Left cardiac atrium (tissue), 4 donors: ENCODE measurements at regions of chr10 and their contacts with region 1.

Region 1: GRCh38 chr10:51001587-51001986 is 72.7 kb upstream of the PRKG1 start:
- DNase-seq: no peak
- ATAC-seq: peak; percentile 50 to 60

Region 2: DNA sequence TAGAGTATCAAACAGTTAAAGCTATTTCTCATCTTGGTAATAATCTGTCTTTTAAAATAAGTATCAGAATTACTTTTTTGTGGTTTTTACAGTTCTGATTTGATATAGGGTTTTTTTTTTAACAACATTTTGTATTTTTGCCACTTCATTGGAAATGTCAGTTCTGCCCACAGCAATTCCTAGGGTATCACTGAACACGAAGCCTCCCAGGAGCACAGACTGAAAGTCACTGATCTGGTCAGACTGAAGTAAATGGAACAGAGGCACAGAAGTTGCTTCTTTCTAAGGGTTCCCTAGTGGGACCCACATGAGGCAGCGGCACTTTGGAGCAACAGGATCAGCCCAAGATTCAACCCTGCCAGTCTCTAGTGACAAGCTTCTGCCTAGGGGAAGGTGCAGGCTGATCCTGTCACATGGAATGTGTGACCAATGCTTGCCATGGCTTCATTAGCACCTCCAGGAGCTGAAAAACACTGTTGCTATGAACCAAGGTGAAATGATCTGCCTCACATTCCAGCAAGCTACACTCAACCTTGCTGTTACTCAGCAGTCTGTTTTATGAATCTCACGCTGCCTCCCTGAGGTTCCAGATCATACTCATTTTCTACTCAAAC is 971.3 kb after region 1 on chr10:
- intact Hi-C with region 1: loop called in 1 of 2 experiments (anchors 10 kb)
- DNase-seq: no peak
- ATAC-seq: no peak

Region 3: GRCh38 chr10:52213321-52213752 is 1211.8 kb after region 1 on chr10:
- intact Hi-C with region 1: loop called in 1 of 2 experiments (anchors 5 kb)
- DNase-seq: no peak
- ATAC-seq: peak in 1 of 2 donors; percentile 86